ENCODE measurements at regions of chr11 and their contacts with region 1.

Region 1: DNA sequence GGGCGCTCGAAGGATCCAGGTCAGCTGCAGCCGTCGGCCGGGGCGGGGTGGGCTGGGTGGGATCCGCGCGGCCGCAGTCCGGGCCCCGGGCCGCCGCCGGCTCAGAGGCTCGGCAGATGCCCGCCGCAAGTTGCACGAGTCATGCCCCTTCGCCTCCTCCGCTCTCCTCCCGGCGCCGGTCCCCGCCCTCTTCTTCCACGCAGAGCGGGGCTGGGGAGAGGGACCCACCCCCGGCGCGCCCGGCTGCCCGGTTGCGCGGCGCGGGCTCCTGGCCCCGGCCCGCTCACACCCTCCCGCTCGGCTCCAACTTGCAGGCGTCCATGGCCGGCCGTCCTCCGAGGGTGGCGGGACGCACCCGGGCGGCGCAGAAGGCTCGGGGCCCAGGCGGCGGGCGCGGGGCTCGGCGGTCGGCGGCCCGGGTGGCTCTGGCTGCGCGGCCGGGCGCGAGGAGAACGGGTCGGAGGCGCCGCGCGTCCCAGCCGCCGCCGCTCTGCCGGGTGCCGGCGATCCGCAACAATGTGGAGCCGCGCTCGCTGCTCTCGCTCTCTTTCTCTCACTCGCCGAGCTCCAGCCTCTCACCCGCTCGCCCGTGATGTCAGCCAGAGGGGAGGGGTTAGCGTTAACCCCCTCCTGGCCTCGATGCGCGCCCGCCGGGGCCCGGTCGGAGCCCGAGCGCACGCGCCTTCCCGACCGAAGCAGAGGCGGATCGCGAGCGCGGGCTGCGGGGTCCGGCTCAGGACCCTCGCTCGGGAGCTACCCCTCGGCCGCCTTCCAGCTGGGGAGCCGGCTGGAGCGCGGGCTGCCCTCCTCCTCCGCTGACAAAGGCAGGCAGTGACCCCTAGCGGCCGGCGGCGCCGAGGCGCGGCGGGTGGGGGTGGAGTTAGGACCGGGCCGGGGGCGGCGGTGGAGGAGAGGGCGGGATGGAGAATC is at the start of gene NECTIN1:
- DNase-seq: peak; percentile 76 to 96 (median 92)

Region 2: GRCh38 chr11:119341222-119342022 is 387.5 kb before region 1 on chr11:
- intact Hi-C with region 1: no loop called
- DNase-seq: peak in 6 of 42 donors; percentile 16 to 76 (median 28)

Region 3: GRCh38 chr11:119666463-119667131 is 62.3 kb before region 1 on chr11:
- intact Hi-C with region 1: loop called (anchors 2 kb)
- DNase-seq: peak; percentile 54 to 95 (median 88)

Region 4: DNA sequence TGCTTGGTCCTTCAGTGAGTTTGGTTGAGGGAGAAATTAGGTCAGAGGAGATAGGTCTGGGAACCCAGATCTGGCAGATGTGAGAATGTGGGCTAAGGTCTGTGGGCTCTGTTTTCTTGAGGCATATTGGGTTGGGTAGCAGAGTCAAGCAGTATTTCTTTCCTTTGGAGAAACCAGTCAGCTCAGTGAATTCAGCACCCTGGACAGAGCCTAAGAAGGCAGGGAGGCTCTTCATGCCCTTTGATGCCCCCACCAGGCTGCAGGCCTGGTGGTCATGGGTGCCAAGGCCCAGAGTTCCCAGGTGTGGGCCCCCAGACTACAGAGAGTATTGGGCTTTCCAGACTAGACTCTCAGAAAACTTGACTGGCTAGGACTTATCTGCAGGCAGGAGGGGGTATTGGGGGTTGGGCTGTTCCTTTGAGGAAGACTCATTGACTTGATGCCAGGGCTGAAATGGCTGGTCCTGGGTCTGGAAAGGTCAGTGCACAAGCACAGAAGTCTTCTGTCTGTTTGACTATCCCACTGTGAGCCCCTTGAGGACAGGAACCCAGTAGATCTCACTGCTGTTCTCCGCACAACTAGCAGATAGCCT is 45.4 kb after region 1 on chr11:
- intact Hi-C with region 1: no loop called
- DNase-seq: peak in 6 of 42 donors; percentile 24 to 65 (median 41)

Region 5: GRCh38 chr11:120013325-120014270 is 284.7 kb after region 1 on chr11:
- intact Hi-C with region 1: loop called (anchors 10 kb)
- DNase-seq: peak; percentile 40 to 92 (median 78)

Region 6: DNA sequence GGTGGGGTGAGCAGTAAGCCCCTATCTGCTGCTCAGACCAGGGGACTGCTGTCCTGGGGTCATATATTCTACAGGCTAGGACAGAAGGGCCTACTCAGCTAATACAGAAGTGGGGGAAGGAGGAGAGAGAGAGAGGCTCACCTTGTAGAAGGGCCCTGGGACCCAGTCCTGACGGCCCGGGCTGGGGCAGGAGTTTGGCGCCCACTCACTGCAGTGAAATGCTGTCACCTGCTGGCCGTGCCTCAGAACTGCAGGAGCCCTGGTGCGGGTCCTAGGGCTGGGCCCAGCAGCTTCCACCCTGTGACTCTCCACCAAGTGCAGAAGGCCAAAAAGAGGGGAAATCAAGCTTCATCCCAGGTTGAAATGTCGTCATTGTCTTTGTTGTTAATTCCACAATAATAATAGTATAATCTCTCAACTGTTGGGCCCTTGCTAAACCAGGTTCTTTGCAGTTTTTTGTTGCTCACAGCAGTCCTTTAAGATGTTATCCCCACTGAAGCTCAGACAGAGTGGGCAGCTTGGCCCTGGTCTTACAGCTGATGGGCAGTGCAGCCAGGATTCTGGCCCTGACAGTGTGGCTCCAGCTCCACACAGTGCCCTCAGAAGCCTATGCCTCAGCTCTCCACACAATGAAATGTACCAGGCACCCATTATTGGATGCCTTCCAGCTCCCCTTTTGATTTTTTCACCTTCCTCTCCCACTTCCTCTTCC is 379.4 kb after region 1 on chr11:
- intact Hi-C with region 1: loop called (anchors 5 kb)
- DNase-seq: peak; percentile 69 to 96 (median 88)

Measured in head of caudate nucleus (tissue), 42 donors.